T-cell (primary cell): ENCODE measurements at regions of chr11 and their contacts with region 1.

Region 1: GRCh38 chr11:65726660-65727059 is 6.1 kb upstream of the RNASEH2C start:
- DNase-seq: no peak
- ATAC-seq: no peak
- H3K4me3 ChIP-seq: no peak overlapping the region
- H3K4me3 Mint-ChIP-seq: no peak overlapping the region
- H3K27ac ChIP-seq: no peak overlapping the region
- H3K27ac Mint-ChIP-seq: no peak overlapping the region
- H3K4me1 ChIP-seq: no peaks in the 10 kb centered on the region
- H3K4me1 Mint-ChIP-seq: peaks cover 0 to 3% (median 0%) of the 10 kb centered on the region in 3 donors
- H3K27me3 ChIP-seq: peaks cover 0 to 24% of the 10 kb centered on the region in 2 experiments
- H3K27me3 Mint-ChIP-seq: peaks cover 3 to 8% of the 10 kb centered on the region in 2 donors

Region 2: DNA sequence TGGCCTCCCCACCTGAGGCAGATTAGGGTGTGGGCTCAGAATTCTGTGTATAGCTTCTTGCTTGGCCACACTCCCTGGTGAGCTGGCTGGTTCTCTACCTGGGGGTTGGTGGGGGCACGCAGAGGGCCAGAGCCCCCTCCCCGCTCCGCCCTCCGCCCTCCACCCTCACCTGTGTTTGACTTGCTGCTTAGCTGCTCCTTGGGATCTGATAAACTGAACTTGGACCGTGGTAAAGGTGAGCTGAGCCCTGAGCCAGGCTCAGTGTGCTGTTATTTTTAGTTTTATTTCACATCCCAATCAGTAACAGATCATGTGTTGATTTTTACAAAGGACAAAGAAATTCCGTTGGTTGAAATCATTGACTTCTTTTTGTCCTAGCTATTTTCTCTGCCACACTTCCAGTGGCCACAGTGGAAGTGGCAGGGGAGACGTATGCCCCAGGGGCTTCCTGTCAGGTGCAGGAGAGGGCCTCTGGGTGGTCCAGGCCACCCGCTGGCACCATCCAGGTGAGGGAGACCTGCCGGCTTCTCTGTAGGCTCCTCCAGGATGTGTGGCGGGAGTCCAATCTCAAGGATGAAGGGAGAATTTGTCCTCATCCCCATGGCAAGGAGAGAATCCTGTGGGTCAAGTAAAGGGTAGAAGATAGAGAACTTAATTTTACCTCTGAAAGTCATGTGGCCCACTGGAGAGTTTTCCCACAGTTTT is 62.3 kb after region 1 on chr11:
- CTCF ChIA-PET with region 1: no interaction called
- POLR2A ChIA-PET with region 1: interaction called in 1 of 2 experiments, 11 read pairs
- DNase-seq: no peak
- ATAC-seq: no peak
- H3K4me3 ChIP-seq: no peak overlapping the region
- H3K4me3 Mint-ChIP-seq: peak overlapping the region in 2 of 3 donors; percentile 6 to 78
- H3K27ac ChIP-seq: no peak overlapping the region
- H3K27ac Mint-ChIP-seq: no peak overlapping the region
- H3K4me1 ChIP-seq: peaks cover 3 to 34% of the 10 kb centered on the region in 2 experiments
- H3K4me1 Mint-ChIP-seq: peaks cover 16 to 45% (median 28%) of the 10 kb centered on the region in 3 donors
- H3K27me3 ChIP-seq: peaks cover 0 to 79% of the 10 kb centered on the region in 2 experiments
- H3K27me3 Mint-ChIP-seq: peaks cover 31 to 50% of the 10 kb centered on the region in 2 donors

Region 3: DNA sequence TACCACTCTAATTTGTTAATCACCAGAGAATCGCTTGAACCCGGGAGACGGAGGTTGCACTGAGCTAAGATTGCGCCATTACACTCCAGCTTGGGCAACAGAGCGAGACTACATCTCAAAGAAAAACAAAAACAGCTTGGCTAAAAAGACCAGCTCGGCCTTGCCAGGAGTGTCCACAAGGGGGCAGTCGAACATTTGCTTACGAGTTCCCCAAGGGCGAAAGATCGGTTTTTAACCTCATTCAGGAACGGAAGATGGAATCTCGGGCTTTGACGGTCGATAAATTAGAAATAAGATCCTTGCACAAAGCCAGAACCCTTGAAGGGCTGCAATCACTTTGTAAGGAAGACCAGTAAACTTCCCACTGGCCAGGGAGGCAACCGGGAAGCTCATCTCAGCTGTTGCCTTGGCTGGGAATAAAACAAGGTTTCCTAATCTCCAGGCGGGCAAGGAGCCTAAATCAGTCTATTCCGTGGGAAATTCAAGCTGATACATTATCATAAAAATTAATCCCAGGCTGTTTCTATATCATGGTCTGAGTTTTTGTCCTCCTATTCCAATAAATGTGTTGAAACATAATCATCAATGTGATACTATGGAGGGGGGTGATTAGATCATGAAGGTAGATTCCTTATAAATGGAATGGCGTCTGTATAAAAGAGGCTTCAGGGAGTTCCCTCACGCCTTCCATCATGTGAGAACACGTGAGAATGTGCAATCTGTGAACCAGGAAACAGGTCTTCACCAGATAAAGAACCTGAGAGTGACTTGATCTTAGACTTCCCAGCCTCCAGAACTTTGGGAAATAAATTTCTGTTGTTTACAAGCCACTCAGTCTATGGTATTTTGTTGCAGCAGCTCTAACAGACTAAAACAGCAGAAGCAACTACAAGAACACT is 659.8 kb after region 1 on chr11:
- CTCF ChIA-PET with region 1: no interaction called
- POLR2A ChIA-PET with region 1: no interaction called
- DNase-seq: peak; percentile 51 to 89 (median 77)
- ATAC-seq: peak; percentile 68 to 78 (median 71)
- H3K4me3 ChIP-seq: peak overlapping the region in 1 of 2 donors; percentile 4
- H3K4me3 Mint-ChIP-seq: peak overlapping the region in 2 of 3 donors; percentile 3 to 17
- H3K27ac ChIP-seq: no peak overlapping the region
- H3K27ac Mint-ChIP-seq: no peak overlapping the region
- H3K4me1 ChIP-seq: peaks cover 0 to 12% of the 10 kb centered on the region in 2 experiments
- H3K4me1 Mint-ChIP-seq: peaks cover 6 to 8% (median 6%) of the 10 kb centered on the region in 3 donors
- H3K27me3 ChIP-seq: peaks cover 2 to 29% of the 10 kb centered on the region in 2 experiments
- H3K27me3 Mint-ChIP-seq: peaks cover 0 to 2% of the 10 kb centered on the region in 2 donors